Activated naive CD4-positive, alpha-beta T cell treated with anti-CD3 and anti-CD28 coated beads, Interleukin-2, amount 10 ng/mL, durations not matched to agents 7 days and 5 days (primary cell): ENCODE measurements at regions of chr6 and their contacts with region 1.

Region 1: DNA sequence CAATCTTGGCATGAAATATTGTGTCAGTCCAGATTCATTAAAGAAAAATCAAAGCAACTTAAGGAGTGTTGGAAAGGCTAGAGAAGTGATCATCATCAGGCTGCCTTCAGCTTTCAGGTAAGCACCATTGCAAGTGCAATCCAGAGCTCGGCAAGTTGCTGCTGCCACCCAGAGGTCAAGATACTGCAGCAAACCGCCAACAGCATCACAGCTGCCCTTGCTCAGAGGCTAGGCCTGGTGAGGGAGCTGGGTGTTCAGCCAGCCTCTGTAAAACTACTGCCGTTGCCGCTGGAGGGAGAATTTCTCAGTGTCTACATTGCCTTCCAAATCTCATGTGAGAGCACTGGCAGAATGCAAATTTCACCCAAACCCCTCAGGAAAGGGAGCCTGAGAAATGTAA is 5.8 kb upstream of the SYNE1 start:
- DNase-seq: peak; percentile 34
- H3K4me3 Mint-ChIP-seq: no peak overlapping the region
- H3K27ac Mint-ChIP-seq: no peak overlapping the region
- H3K4me1 Mint-ChIP-seq: no peaks in the 10 kb centered on the region
- H3K27me3 Mint-ChIP-seq: peaks cover 13% of the 10 kb centered on the region

Region 2: DNA sequence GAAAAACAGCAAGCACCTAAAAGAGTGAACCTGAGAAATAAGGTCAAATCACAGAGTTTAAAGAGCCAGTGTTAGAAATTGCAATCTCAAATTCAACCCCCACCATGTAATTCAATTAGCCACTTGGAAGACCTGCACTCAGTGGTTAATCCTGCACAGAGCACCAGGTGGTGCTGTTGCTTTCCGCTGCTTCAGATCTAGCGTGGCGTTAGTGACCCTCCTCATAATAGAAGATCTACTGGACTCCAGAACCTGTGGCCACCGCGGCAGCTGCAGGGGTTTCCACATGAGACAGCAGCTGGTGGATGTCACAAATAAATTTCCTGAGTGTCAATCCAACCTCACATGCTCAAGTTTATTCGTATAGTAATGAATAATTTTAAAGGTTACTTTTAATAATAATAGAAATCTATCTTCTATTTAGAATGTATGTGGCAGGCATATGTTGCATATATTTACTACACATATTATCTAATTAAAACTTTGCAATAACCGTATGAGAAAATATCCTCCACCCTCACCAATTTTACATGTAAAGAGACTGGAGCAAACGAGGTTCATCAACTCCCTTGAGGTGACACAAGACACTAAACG is 90.3 kb before region 1 on chr6:
- CTCF ChIA-PET with region 1: interaction called, 11 read pairs
- DNase-seq: peak; percentile 37
- H3K4me3 Mint-ChIP-seq: no peak overlapping the region
- H3K27ac Mint-ChIP-seq: no peak overlapping the region
- H3K4me1 Mint-ChIP-seq: no peaks in the 10 kb centered on the region
- H3K27me3 Mint-ChIP-seq: no peaks in the 10 kb centered on the region

Region 3: DNA sequence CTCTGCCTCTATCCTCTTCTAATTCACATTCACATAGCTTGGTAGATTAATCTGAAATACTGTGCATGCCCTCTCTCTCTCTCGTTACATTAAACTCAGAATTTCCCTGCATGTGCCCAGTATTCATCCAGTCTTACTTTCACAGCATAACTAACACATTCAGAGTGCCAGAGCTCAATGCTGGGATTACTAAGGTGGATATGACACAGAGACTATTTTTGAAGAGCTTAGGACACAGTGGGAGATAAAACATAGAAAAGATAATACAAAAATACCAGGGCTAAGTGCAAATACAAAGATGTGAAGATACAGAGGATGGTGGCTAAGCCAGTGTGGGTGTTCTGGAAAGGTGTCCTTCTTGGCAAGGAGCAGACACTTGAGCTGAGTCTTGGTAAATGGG is 12.2 kb before region 1 on chr6:
- CTCF ChIA-PET with region 1: no interaction called
- DNase-seq: no peak
- H3K4me3 Mint-ChIP-seq: no peak overlapping the region
- H3K27ac Mint-ChIP-seq: no peak overlapping the region
- H3K4me1 Mint-ChIP-seq: peaks cover 6% of the 10 kb centered on the region
- H3K27me3 Mint-ChIP-seq: peaks cover 8% of the 10 kb centered on the region

Region 4: GRCh38 chr6:152685819-152686218 is 42.8 kb after region 1 on chr6:
- CTCF ChIA-PET with region 1: no interaction called
- DNase-seq: no peak
- H3K4me3 Mint-ChIP-seq: no peak overlapping the region
- H3K27ac Mint-ChIP-seq: no peak overlapping the region
- H3K4me1 Mint-ChIP-seq: no peaks in the 10 kb centered on the region
- H3K27me3 Mint-ChIP-seq: no peaks in the 10 kb centered on the region

Region 5: GRCh38 chr6:152775428-152775827 is 132.4 kb after region 1 on chr6:
- CTCF ChIA-PET with region 1: no interaction called
- DNase-seq: no peak
- H3K4me3 Mint-ChIP-seq: no peak overlapping the region
- H3K27ac Mint-ChIP-seq: no peak overlapping the region
- H3K4me1 Mint-ChIP-seq: no peaks in the 10 kb centered on the region
- H3K27me3 Mint-ChIP-seq: no peaks in the 10 kb centered on the region

Region 6: DNA sequence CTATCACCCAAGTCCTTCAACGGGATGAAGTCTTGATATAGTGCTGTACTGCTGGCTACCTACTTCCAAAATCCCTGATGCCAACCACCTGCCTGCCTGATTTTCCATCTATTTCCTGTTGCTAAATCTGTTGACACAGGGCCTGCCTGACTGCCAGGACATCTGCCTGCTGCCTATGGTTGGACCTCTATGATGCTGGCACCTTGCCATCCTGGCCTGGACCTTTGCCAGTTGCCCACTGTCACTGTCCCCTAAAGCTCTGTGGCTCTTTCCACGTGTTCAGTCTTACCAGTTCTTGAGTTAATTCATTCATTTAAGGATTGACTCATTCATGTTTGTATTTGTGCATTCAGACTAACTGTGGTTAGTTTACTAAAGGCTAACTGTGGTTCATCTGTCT is 497.3 kb after region 1 on chr6:
- CTCF ChIA-PET with region 1: no interaction called
- DNase-seq: no peak
- H3K4me3 Mint-ChIP-seq: no peak overlapping the region
- H3K27ac Mint-ChIP-seq: no peak overlapping the region
- H3K4me1 Mint-ChIP-seq: no peaks in the 10 kb centered on the region
- H3K27me3 Mint-ChIP-seq: no peaks in the 10 kb centered on the region